Ovary (tissue), 10 donors: ENCODE measurements at regions of chr7 and their contacts with region 1.

Region 1: GRCh38 chr7:37201003-37201875 is 247.4 kb downstream of the ELMO1 start:
- DNase-seq: peak; percentile 74 to 86 (median 82)
- H3K4me3 ChIP-seq: no peak overlapping the region
- H3K27ac ChIP-seq: peak overlapping the region; percentile 43 to 48
- H3K4me1 ChIP-seq: peaks cover 4% of the 10 kb centered on the region
- H3K27me3 ChIP-seq: no peaks in the 10 kb centered on the region
- CTCF ChIP-seq: peak in 2 of 3 donors; percentile 76
- EP300 ChIP-seq: no peak
- POLR2A ChIP-seq: no peak

Region 2: GRCh38 chr7:36967387-36967786 is 233.9 kb before region 1 on chr7:
- intact Hi-C with region 1: loop called in 1 of 4 experiments (anchors 5 kb)
- DNase-seq: peak; percentile 39 to 74 (median 57)
- H3K4me3 ChIP-seq: no peak overlapping the region
- H3K27ac ChIP-seq: no peak overlapping the region
- H3K4me1 ChIP-seq: no peaks in the 10 kb centered on the region
- H3K27me3 ChIP-seq: no peaks in the 10 kb centered on the region
- CTCF ChIP-seq: peak; percentile 60 to 72 (median 65)
- EP300 ChIP-seq: no peak
- POLR2A ChIP-seq: no peak

Region 3: GRCh38 chr7:37504801-37505200 is 303.6 kb after region 1 on chr7:
- intact Hi-C with region 1: loop called in 1 of 4 experiments (anchors 5 kb)
- DNase-seq: no peak
- H3K4me3 ChIP-seq: no peak overlapping the region
- H3K27ac ChIP-seq: no peak overlapping the region
- H3K4me1 ChIP-seq: no peaks in the 10 kb centered on the region
- H3K27me3 ChIP-seq: no peaks in the 10 kb centered on the region
- CTCF ChIP-seq: no peak
- EP300 ChIP-seq: no peak
- POLR2A ChIP-seq: no peak

Region 4: GRCh38 chr7:37833107-37833817 is 632.0 kb after region 1 on chr7:
- intact Hi-C with region 1: loop called in 1 of 4 experiments (anchors 10 kb)
- DNase-seq: peak; percentile 27 to 48 (median 38)
- H3K4me3 ChIP-seq: peak overlapping the region; percentile 25
- H3K27ac ChIP-seq: no peak overlapping the region
- H3K4me1 ChIP-seq: no peaks in the 10 kb centered on the region
- H3K27me3 ChIP-seq: no peaks in the 10 kb centered on the region
- CTCF ChIP-seq: peak; percentile 37 to 58 (median 55)
- EP300 ChIP-seq: no peak
- POLR2A ChIP-seq: no peak

Region 5: GRCh38 chr7:37916673-37917660 is 715.7 kb after region 1 on chr7 and contains the start of gene SFRP4:
- intact Hi-C with region 1: loop called in 1 of 4 experiments (anchors 10 kb)
- DNase-seq: peak; percentile 86 to 92 (median 90)
- H3K4me3 ChIP-seq: peak within 1 kb of the TSS; percentile 50
- H3K27ac ChIP-seq: peak within 1 kb of the TSS; percentile 90 to 96
- H3K4me1 ChIP-seq: peaks cover 13% of the 10 kb centered on the region
- H3K27me3 ChIP-seq: no peaks in the 10 kb centered on the region
- CTCF ChIP-seq: peak; percentile 65 to 85 (median 75)
- EP300 ChIP-seq: no peak
- POLR2A ChIP-seq: peak; percentile 63
- total RNA-seq, gene SFRP4: 42.3 to 121 (median 52.9) TPM